T-cell (primary cell): ENCODE measurements at regions of chr11 and their contacts with region 1.

Region 1: DNA sequence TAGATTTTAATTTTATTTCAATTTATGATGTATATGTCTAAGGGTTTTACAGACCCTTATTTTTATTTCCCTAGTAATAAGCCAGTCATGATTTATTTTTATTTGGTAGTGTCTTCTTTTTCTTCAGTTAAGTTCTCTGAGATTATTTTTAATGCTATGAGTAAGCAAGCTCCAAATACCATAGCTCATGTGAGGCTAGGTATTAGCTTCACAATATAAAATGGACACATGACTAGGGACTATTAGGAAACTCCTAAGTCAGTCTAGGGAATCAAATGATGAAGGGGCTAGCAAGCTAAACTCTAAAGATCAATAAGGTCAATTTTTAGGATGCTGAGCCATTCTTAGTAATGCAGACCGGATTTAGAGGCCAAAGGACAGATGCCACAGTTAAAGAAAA is 45.9 kb downstream of the CKAP5 start:
- DNase-seq: no peak
- ATAC-seq: no peak
- H3K4me3 ChIP-seq: no peak overlapping the region
- H3K4me3 Mint-ChIP-seq: no peak overlapping the region
- H3K27ac ChIP-seq: no peak overlapping the region
- H3K27ac Mint-ChIP-seq: no peak overlapping the region
- H3K4me1 ChIP-seq: no peaks in the 10 kb centered on the region
- H3K4me1 Mint-ChIP-seq: no peaks in the 10 kb centered on the region
- H3K27me3 ChIP-seq: no peaks in the 10 kb centered on the region
- H3K27me3 Mint-ChIP-seq: no peaks in the 10 kb centered on the region

Region 2: DNA sequence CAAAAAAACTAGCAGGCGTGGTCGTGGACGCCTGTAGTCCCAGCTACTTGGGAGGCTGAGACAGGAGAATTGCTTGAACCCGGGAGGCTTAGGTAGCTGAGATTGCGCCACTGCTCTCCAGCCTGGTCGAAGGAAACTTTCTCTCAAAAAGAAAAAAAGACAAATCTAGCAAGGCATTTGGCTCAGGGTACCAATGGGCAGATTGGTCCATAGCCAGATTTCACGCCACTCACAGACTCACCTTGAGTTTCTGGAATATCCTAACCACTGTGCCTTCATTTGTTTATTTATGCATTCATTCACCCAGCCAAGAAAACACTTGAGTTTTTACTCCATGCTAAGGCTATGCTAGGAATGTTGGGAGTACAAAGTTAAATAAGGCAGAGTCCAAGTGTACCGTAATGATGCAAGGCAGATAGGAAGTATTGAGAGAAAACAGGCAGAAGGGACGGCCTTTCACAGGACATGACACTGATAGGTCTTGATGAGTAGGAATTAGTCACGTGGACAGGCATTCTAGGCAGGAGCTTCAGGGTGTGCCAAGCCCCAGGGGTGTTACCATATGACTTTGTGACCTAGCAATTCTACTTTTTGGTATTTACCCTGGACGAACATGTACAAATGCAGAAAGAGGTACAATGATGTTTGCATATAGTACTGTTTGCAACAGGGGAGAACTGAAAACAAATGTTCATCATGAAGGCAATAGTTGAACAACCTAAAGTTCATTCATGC is 389.1 kb after region 1 on chr11:
- CTCF ChIA-PET with region 1: interaction called in 1 of 2 experiments, 11 read pairs
- POLR2A ChIA-PET with region 1: no interaction called
- DNase-seq: no peak
- ATAC-seq: no peak
- H3K4me3 ChIP-seq: no peak overlapping the region
- H3K4me3 Mint-ChIP-seq: no peak overlapping the region
- H3K27ac ChIP-seq: no peak overlapping the region
- H3K27ac Mint-ChIP-seq: no peak overlapping the region
- H3K4me1 ChIP-seq: peaks cover 8 to 23% of the 10 kb centered on the region in 2 experiments
- H3K4me1 Mint-ChIP-seq: peaks cover 0 to 7% (median 6%) of the 10 kb centered on the region in 3 donors
- H3K27me3 ChIP-seq: peaks cover 7 to 41% of the 10 kb centered on the region in 2 experiments
- H3K27me3 Mint-ChIP-seq: peaks cover 7 to 9% of the 10 kb centered on the region in 2 donors